HepG2 (cell line): ENCODE measurements at regions of chr10 and their contacts with region 1.

Region 1: DNA sequence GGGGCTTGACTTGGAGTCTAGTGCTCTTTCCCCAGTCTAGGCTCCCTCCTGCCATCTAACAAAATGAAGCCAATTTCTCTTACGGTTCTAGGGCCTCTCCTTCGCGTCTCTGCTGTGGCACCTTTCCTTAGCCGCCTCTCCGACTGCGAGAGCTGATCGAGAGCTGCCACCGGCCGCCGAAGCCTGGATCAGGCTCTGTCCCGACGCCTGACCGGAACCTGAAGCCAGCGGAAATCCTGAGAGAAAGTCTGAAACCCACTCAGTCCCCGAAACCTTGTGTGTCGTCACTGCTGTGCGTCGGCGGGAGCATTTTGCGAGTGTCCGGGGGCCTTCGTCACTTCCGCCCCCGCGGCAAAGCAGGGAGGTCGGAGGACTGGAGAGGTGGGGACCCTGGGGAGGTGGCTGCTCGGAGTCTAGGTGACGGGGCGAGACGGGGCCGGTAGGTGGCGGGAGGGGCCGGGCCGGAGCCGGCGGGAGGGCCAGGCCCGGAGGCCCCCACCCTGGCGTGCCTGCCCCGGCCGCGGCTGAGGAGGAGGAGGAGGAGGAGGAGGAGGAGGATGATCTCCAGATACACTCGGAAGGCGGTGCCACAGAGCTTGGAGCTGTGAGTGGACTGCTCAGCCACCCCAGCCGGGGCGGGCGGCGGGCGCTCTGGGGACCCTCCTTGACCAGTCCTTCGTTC is at the starts of genes ECD and FAM149B1:
- DNase-seq: peak; percentile 95
- ATAC-seq: peak; percentile 98
- H3K4me3 ChIP-seq: peak within 1 kb of the TSS; percentile 80 to 89 (median 84)
- H3K27ac ChIP-seq: peak within 1 kb of the TSS; percentile 89
- H3K4me1 ChIP-seq: peaks cover 15% of the 10 kb centered on the region
- H3K27me3 ChIP-seq: no peaks in the 10 kb centered on the region; a peak in 1 of 5 replicates
- CTCF ChIP-seq: peak; percentile 66
- EP300 ChIP-seq: peak; percentile 28 to 63; a peak in 3 of 4 replicates
- POLR2A ChIP-seq: peak; percentile 92 to 93
- RAD21 ChIP-seq: peak; percentile 65; the same call in 1 of the 2 replicates
- total RNA-seq, gene ECD: 27.6 and 41.8 TPM in 2 replicates
- total RNA-seq, gene FAM149B1: 9.1 and 9.3 TPM in 2 replicates

Region 2: DNA sequence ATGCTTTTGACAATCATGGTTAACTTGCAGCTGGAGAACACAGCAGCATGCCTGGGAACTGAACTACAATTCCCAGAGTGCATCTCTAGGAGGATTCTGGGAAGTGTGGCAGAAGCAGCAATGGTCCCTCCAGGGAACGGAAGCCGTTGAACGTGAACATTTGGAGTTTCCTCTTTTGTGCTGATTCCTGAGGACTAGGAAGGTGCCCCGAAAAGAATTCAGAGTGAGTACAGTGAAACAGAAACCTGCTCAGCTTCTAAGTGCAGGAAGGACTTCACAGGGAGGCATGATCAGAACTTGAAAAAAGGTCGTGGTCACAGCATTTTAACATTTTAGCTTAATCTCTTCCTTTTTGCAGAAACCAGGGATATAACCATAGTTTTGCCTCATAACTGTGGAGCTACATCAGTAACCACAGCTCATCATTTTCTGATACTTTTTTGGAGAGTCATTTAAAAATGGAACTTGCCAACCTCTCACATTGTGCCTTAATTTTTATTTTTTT is 57.5 kb before region 1 on chr10 and contains the start of gene NUDT13:
- CTCF ChIA-PET with region 1: no interaction called
- POLR2A ChIA-PET with region 1: interaction called, 16 read pairs
- in situ Hi-C with region 1: no loop called
- intact Hi-C with region 1: no loop called
- DNase-seq: peak; percentile 83
- ATAC-seq: peak; percentile 98
- H3K4me3 ChIP-seq: peak within 1 kb of the TSS; percentile 45 to 82 (median 80)
- H3K27ac ChIP-seq: peak within 1 kb of the TSS; percentile 96
- H3K4me1 ChIP-seq: peaks cover 11% of the 10 kb centered on the region
- H3K27me3 ChIP-seq: no peaks in the 10 kb centered on the region
- CTCF ChIP-seq: no peak
- EP300 ChIP-seq: no peak
- POLR2A ChIP-seq: peak; percentile 68 to 71
- RAD21 ChIP-seq: no peak
- total RNA-seq, gene NUDT13: 2.5 and 4.2 TPM in 2 replicates

Region 3: GRCh38 chr10:73218431-73219191 is 50.7 kb after region 1 on chr10:
- CTCF ChIA-PET with region 1: interaction called, 4 read pairs
- POLR2A ChIA-PET with region 1: interaction called, 10 read pairs
- in situ Hi-C with region 1: no loop called
- intact Hi-C with region 1: loop called (anchors 2 kb)
- DNase-seq: peak; percentile 35
- ATAC-seq: peak; percentile 62
- H3K4me3 ChIP-seq: no peak overlapping the region
- H3K27ac ChIP-seq: no peak overlapping the region
- H3K4me1 ChIP-seq: peaks cover 30% of the 10 kb centered on the region
- H3K27me3 ChIP-seq: no peaks in the 10 kb centered on the region
- CTCF ChIP-seq: peak; percentile 53
- EP300 ChIP-seq: no peak
- POLR2A ChIP-seq: no peak
- RAD21 ChIP-seq: 0 out of 2 replicates have a peak, but pooled peaks have one; percentile 19

Region 4: DNA sequence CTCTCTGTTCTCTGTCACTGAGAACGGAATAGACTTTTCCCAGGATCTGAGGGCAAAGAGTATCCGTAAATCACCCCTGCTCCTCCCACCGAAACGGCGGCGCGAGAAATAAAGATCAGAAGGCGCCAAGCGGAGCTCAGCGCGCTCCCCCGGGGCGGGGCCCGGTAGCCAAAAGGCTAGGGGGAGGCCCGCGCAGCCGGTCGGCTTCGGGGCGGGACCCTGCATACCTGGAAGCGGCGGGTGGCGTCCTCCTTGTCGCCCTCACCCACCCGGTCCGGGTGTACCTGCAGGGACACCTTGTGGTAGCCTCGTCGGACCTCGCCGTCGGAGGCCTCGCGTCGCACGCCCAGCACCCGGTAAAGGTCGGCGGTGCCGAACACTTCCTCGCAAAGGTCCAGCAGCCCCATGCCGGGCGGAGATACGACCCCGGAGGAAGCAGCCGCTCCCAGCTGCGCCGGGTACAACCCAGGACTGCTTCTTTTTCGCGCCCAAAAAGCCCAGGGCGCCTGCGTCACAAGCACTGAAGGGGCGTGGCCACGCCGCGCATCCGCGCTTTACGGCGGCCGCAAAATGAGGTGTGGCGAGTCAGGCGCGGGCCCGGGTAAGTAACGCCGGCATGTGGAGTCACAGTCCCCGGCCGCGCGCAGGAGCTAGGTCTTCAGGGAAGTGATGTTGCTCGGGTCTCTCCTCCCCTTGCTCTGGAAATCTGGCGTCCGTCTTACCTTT is 79.0 kb after region 1 on chr10 and contains the start of gene DNAJC9:
- CTCF ChIA-PET with region 1: no interaction called
- POLR2A ChIA-PET with region 1: interaction called, 20 read pairs
- in situ Hi-C with region 1: no loop called
- intact Hi-C with region 1: loop called (anchors 2 kb)
- DNase-seq: peak; percentile 87
- ATAC-seq: peak; percentile 90
- H3K4me3 ChIP-seq: peak within 1 kb of the TSS; percentile 64 to 97 (median 79)
- H3K27ac ChIP-seq: peak within 1 kb of the TSS; percentile 94
- H3K4me1 ChIP-seq: peaks cover 50% of the 10 kb centered on the region
- H3K27me3 ChIP-seq: no peaks in the 10 kb centered on the region; a peak in 1 of 5 replicates
- CTCF ChIP-seq: peak; percentile 75
- EP300 ChIP-seq: 0 out of 4 replicates have a peak, but pooled peaks of 1 of the 2 experiments have one; percentile 3
- POLR2A ChIP-seq: peak; percentile 89 to 96
- RAD21 ChIP-seq: peak; percentile 59
- total RNA-seq, gene DNAJC9: 60.3 and 76.9 TPM in 2 replicates

Region 5: DNA sequence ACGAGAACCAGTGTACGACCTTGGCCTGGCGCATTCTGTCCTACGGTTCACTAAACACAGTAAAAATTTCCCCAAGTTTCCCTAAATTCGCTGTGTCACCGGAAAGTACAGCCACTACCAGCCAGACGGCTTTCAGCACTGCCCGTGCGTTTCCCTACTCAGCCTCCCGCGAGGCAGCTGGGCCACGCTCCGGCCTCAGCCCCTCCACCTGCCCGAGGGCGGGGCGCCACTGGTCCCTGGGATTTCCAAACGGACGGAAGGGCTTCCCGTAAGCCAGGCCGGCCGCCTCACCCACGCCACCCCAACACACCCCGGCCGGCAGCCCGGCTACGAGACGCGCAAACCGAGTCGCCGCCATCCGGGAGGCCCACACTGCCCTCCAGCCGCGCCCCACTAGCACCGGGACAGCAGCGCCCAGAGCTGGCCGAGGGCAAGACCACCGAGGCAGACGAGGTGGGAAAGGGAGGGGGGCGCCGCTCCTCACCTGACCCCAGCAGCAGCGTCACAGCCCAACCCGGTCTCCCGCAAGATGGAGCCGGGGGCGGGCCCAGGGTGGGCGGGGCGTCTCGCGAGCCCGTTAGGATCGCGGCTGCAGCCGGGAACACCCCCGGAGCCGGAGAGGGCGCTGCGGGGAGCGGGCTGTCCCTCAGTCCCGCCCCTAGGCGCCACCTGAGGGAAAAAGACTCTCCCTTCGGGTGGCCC is 245.8 kb after region 1 on chr10 and contains the start of gene ANXA7:
- CTCF ChIA-PET with region 1: no interaction called
- POLR2A ChIA-PET with region 1: no interaction called
- in situ Hi-C with region 1: no loop called
- intact Hi-C with region 1: no loop called
- DNase-seq: peak; percentile 81
- ATAC-seq: peak; percentile 95
- H3K4me3 ChIP-seq: peak within 1 kb of the TSS; percentile 64 to 100 (median 89)
- H3K27ac ChIP-seq: peak within 1 kb of the TSS; percentile 99
- H3K4me1 ChIP-seq: peaks cover 65% of the 10 kb centered on the region
- H3K27me3 ChIP-seq: no peaks in the 10 kb centered on the region; a peak in 1 of 5 replicates
- CTCF ChIP-seq: peak; percentile 51
- EP300 ChIP-seq: no peak
- POLR2A ChIP-seq: peak; percentile 61 to 83
- RAD21 ChIP-seq: no peak
- total RNA-seq, gene ANXA7: 89.0 and 139 TPM in 2 replicates